ENCODE measurements at regions of chr3 and their contacts with region 1.

Region 1: GRCh38 chr3:138923531-138923994 is 23.4 kb downstream of the FOXL2 start:
- DNase-seq: peak; percentile 92
- ATAC-seq: peak; percentile 98
- H3K4me3 Mint-ChIP-seq: no peak overlapping the region
- H3K27ac Mint-ChIP-seq: no peak overlapping the region
- H3K4me1 Mint-ChIP-seq: no peaks in the 10 kb centered on the region
- H3K27me3 Mint-ChIP-seq: peaks cover 2% of the 10 kb centered on the region

Region 2: GRCh38 chr3:138417559-138417982 is 506.0 kb before region 1 on chr3:
- CTCF ChIA-PET with region 1: interaction called, 15 read pairs
- POLR2A ChIA-PET with region 1: no interaction called
- intact Hi-C with region 1: loop called (anchors 1 kb)
- DNase-seq: peak; percentile 80
- ATAC-seq: peak; percentile 87
- H3K4me3 Mint-ChIP-seq: no peak overlapping the region
- H3K27ac Mint-ChIP-seq: no peak overlapping the region
- H3K4me1 Mint-ChIP-seq: peaks cover 4% of the 10 kb centered on the region
- H3K27me3 Mint-ChIP-seq: peaks cover 9% of the 10 kb centered on the region

Region 3: GRCh38 chr3:138678086-138678485 is 245.5 kb before region 1 on chr3:
- CTCF ChIA-PET with region 1: interaction called, 11 read pairs
- POLR2A ChIA-PET with region 1: no interaction called
- intact Hi-C with region 1: no loop called
- DNase-seq: no peak
- ATAC-seq: no peak
- H3K4me3 Mint-ChIP-seq: no peak overlapping the region
- H3K27ac Mint-ChIP-seq: no peak overlapping the region
- H3K4me1 Mint-ChIP-seq: no peaks in the 10 kb centered on the region
- H3K27me3 Mint-ChIP-seq: no peaks in the 10 kb centered on the region

Region 4: DNA sequence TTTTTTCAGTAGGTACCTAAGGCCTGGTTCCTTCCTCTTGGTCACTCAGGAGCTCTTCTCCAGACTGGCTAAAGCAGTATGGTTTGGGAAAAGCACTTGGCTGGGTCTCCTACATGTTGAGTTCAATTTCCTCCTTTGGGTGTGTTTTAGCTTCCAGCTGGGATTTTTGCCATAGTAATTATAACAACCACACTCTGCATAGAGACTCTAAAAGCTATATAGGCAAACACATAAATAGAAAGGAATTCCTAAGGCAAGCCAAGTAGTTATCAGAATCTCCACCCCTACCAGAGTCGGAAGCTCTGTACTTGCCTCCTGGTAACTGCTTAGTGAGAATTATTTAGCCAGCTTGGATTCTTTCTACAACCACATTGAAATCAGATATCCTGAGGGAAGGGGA is 25.3 kb before region 1 on chr3:
- CTCF ChIA-PET with region 1: interaction called, 10 read pairs
- POLR2A ChIA-PET with region 1: no interaction called
- intact Hi-C with region 1: no loop called
- DNase-seq: no peak
- ATAC-seq: no peak
- H3K4me3 Mint-ChIP-seq: no peak overlapping the region
- H3K27ac Mint-ChIP-seq: no peak overlapping the region
- H3K4me1 Mint-ChIP-seq: no peaks in the 10 kb centered on the region
- H3K27me3 Mint-ChIP-seq: no peaks in the 10 kb centered on the region

Region 5: GRCh38 chr3:138935848-138936740 is 12.5 kb after region 1 on chr3:
- CTCF ChIA-PET with region 1: interaction called, 41 read pairs
- POLR2A ChIA-PET with region 1: no interaction called
- intact Hi-C with region 1: no loop called
- DNase-seq: peak; percentile 84
- ATAC-seq: peak; percentile 73
- H3K4me3 Mint-ChIP-seq: peak overlapping the region; percentile 63
- H3K27ac Mint-ChIP-seq: no peak overlapping the region
- H3K4me1 Mint-ChIP-seq: peaks cover 25% of the 10 kb centered on the region
- H3K27me3 Mint-ChIP-seq: peaks cover 61% of the 10 kb centered on the region

Measured in activated CD4-positive, alpha-beta T cell treated with anti-CD3 and anti-CD28 coated beads for 36 hours (primary cell).